PC-3 (cell line): ENCODE measurements at regions of chr18 and their contacts with region 1.

Region 1: GRCh38 chr18:54127759-54128378 is 96.6 kb downstream of the MBD2 start:
- DNase-seq: peak; percentile 76
- ATAC-seq: peak; percentile 97
- H3K4me3 ChIP-seq: no peak overlapping the region
- H3K27ac ChIP-seq: no peak overlapping the region
- H3K4me1 ChIP-seq: peaks cover 5% of the 10 kb centered on the region; the same call in 1 of the 2 replicates
- H3K27me3 ChIP-seq: no peaks in the 10 kb centered on the region
- CTCF ChIP-seq: peak; percentile 86

Region 2: DNA sequence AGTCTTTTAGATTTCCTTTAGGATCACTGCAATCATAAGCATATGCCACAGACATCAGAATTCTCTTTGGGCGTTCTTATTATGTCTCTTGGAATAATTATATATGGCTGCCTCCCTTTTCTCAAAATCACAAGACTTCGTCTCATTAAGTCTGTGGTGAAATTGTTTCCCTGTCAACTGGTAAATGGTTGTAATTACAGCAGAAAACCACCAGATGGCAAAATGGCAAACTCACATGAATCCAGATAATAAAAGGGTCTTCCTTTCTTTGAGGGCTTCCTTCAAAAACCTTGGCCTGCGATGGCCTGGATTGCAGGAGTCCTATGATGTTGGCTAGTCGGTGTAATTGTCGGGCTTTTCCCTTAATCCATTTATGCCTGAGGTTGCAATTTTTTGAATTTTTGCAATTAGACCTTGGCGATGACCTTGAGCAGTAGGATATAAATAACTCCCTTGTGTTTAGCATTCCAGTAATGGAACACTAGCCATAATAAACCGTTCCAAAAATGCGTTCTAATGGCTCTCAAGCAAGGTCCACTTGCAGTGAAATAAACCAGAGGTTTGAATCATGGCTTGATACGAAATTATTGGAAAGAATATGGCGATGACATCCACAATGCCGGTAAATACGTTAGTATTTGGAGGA is 559.8 kb before region 1 on chr18:
- CTCF ChIA-PET with region 1: no interaction called
- POLR2A ChIA-PET with region 1: no interaction called
- intact Hi-C with region 1: loop called (anchors 2 kb)
- DNase-seq: peak; percentile 43
- ATAC-seq: no peak
- H3K4me3 ChIP-seq: no peak overlapping the region
- H3K27ac ChIP-seq: no peak overlapping the region
- H3K4me1 ChIP-seq: no peaks in the 10 kb centered on the region
- H3K27me3 ChIP-seq: peaks cover 14% of the 10 kb centered on the region
- CTCF ChIP-seq: peak; percentile 67

Region 3: DNA sequence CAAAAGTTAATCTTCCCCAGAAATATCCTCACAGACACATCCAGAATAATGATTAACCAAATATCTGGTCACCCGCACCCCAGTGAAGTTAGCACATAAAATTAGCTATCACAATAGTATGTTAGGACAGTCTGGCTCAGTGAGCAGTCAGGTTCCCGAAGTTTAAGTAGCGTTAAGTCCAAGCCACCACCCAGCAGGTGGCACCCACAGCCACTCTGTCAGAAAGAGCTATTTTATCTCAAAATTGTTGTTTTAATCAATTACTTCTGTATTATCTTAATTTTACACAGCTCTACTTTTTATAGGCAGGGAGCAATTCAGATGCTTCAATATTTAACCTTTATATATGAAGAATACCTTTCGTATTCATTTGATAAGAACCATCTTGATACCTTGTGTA is 440.9 kb before region 1 on chr18:
- CTCF ChIA-PET with region 1: no interaction called
- POLR2A ChIA-PET with region 1: no interaction called
- intact Hi-C with region 1: loop called (anchors 5 kb)
- DNase-seq: peak; percentile 35
- ATAC-seq: peak; percentile 62; the same call in 1 of the 2 replicates
- H3K4me3 ChIP-seq: no peak overlapping the region
- H3K27ac ChIP-seq: no peak overlapping the region
- H3K4me1 ChIP-seq: no peaks in the 10 kb centered on the region
- H3K27me3 ChIP-seq: peaks cover 72% of the 10 kb centered on the region
- CTCF ChIP-seq: peak; percentile 64

Region 4: GRCh38 chr18:54149078-54149697 is 21.3 kb after region 1 on chr18:
- CTCF ChIA-PET with region 1: no interaction called
- POLR2A ChIA-PET with region 1: no interaction called
- intact Hi-C with region 1: loop called (anchors 2 kb)
- DNase-seq: peak; percentile 91
- ATAC-seq: peak; percentile 77
- H3K4me3 ChIP-seq: peak overlapping the region; percentile 55
- H3K27ac ChIP-seq: peak overlapping the region; percentile 96
- H3K4me1 ChIP-seq: peaks cover 47% of the 10 kb centered on the region
- H3K27me3 ChIP-seq: no peaks in the 10 kb centered on the region
- CTCF ChIP-seq: no peak

Region 5: GRCh38 chr18:54662986-54663385 is 535.1 kb after region 1 on chr18:
- CTCF ChIA-PET with region 1: no interaction called
- POLR2A ChIA-PET with region 1: no interaction called
- intact Hi-C with region 1: no loop called
- DNase-seq: no peak
- ATAC-seq: no peak
- H3K4me3 ChIP-seq: no peak overlapping the region
- H3K27ac ChIP-seq: no peak overlapping the region
- H3K4me1 ChIP-seq: no peaks in the 10 kb centered on the region
- H3K27me3 ChIP-seq: peaks cover 6% of the 10 kb centered on the region; the same call in 1 of the 2 replicates
- CTCF ChIP-seq: no peak